H1 (cell line): ENCODE measurements at regions of chr9 and their contacts with region 1.

Region 1: GRCh38 chr9:20670395-20670794 is 13.7 kb upstream of the FOCAD start:
- DNase-seq: no peak
- H3K4me3 ChIP-seq: no peak overlapping the region
- H3K27ac ChIP-seq: no peak overlapping the region
- H3K4me1 ChIP-seq: peaks cover 0 to 2% (median 0%) of the 10 kb centered on the region in 4 experiments; a peak in 1 of 7 replicates
- H3K27me3 ChIP-seq: no peaks in the 10 kb centered on the region
- CTCF ChIP-seq: no peak
- EP300 ChIP-seq: no peak
- POLR2A ChIP-seq: no peak
- RAD21 ChIP-seq: no peak

Region 2: DNA sequence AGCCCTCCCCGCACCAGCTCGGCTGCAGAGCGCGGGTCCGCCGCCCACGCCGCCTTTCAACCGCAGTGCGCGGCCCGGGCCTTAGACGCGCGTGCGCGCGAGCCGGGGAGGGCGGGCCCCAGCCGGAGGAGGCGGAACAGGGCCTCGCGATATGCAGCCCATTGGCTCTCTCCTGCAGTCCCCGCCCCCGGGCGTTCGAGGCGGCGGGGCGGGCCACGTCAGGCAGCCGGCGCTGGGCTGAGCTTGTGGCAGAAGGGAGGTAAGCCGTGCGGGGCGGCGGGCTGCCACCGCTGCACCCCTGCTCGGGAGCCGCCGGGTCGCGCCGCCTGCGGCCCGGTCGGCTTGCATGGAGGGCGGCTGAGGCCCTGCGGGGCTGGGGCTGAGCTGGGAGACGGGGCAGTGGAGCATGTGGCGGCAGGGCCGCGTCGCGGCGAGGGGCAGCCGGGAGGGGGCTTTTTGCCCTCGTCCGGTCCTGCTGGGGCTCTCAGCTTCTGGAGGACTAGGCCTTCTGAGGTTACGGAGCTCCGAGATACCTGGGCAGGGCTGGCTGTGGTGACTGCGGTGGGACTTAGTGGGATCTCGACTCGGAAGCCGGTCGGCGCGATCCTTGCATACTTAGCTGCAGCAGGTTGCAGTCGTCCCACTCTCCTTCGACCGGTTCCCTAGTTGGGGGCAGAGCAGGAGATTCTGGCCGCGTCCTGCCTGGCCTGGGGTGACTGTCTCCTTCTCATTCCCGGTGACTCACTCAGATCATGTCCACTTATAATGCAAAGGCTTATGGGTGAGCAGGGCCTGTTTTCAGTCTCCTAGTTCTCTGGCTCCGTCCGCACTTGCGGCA is 13.9 kb after region 1 on chr9 and contains the start of gene FOCAD:
- CTCF ChIA-PET with region 1: interaction called, 4 read pairs
- POLR2A ChIA-PET with region 1: interaction called, 22 read pairs
- DNase-seq: peak; percentile 87 to 96
- H3K4me3 ChIP-seq: peak within 1 kb of the TSS; percentile 64 to 75 (median 70)
- H3K27ac ChIP-seq: peak within 1 kb of the TSS; percentile 61; the same call in 1 of the 2 replicates
- H3K4me1 ChIP-seq: peaks cover 3 to 10% (median 6%) of the 10 kb centered on the region in 4 experiments; a peak in 4 of 7 replicates
- H3K27me3 ChIP-seq: no peaks in the 10 kb centered on the region
- CTCF ChIP-seq: no peak
- EP300 ChIP-seq: no peak
- POLR2A ChIP-seq: peak; percentile 97
- RAD21 ChIP-seq: no peak; a peak in 1 of 4 replicates
- total RNA-seq, gene FOCAD: 36.8 and 38.4 TPM in 2 replicates